ENCODE measurements at regions of chr6 and their contacts with region 1.

Region 1: GRCh38 chr6:16128759-16129622 is at the start of gene MYLIP:
- DNase-seq: peak; percentile 99
- H3K4me3 ChIP-seq: peak within 1 kb of the TSS; percentile 91 to 100 (median 97)
- H3K27ac ChIP-seq: peak within 1 kb of the TSS; percentile 97 to 99 (median 99)
- H3K4me1 ChIP-seq: peaks cover 14 to 30% (median 28%) of the 10 kb centered on the region in 4 donors
- H3K27me3 ChIP-seq: no peaks in the 10 kb centered on the region
- CTCF ChIP-seq: peak; percentile 62 to 95 (median 76)
- EP300 ChIP-seq: no peak
- POLR2A ChIP-seq: peak; percentile 100
- total RNA-seq, gene MYLIP: 22.5 to 43.2 (median 40.7) TPM

Region 2: DNA sequence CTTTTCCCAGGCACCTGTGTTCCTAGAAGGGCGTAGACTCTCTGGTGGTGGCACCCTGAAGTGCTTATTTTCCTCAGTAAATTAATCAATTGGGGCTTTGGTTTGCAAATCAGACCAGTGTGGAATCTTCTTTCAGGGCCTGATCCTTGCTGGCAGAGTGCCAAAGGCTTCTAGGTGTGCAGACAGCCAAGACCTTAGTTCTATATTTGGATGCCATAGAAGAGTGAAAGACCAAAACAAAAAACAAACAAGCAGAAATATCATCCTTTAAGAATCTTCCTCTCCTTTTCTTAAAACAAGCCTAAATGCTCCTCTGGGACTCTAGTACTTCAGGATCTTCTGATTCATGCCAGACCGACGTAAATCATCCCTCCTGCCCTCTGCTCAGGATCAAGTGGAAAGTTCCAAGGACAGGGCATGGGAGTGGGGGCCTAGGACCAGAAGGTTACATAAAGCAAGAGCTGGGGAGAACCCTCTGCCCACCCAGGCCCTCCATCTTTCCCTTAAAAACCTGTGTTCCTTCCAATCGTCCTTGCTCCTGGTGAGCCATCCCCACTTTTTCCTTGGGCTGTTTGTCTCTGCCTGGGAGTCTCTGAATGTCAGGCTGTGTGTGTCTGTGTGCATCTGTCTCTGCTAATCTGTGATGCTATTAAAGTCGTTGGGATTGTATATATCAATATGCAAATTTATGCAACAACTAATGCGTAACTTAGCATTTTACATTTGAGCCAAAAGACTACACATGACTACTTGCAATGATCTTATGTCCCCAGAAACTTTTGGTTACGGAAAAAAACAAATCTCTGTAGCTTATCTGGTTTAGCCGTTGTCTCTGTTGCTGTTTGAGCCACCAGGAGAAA is 70.5 kb before region 1 on chr6:
- in situ Hi-C with region 1: no loop called
- intact Hi-C with region 1: loop called (anchors 10 kb)
- DNase-seq: no peak
- H3K4me3 ChIP-seq: no peak overlapping the region
- H3K27ac ChIP-seq: no peak overlapping the region
- H3K4me1 ChIP-seq: peaks cover 0 to 9% (median 0%) of the 10 kb centered on the region in 4 donors
- H3K27me3 ChIP-seq: no peaks in the 10 kb centered on the region
- CTCF ChIP-seq: no peak
- EP300 ChIP-seq: no peak
- POLR2A ChIP-seq: no peak

Region 3: GRCh38 chr6:16625291-16626265 is 496.6 kb after region 1 on chr6:
- in situ Hi-C with region 1: no loop called
- intact Hi-C with region 1: no loop called
- DNase-seq: no peak
- H3K4me3 ChIP-seq: no peak overlapping the region
- H3K27ac ChIP-seq: no peak overlapping the region
- H3K4me1 ChIP-seq: no peaks in the 10 kb centered on the region
- H3K27me3 ChIP-seq: no peaks in the 10 kb centered on the region
- CTCF ChIP-seq: no peak
- EP300 ChIP-seq: no peak
- POLR2A ChIP-seq: no peak